Psoas muscle (tissue), 8 donors: ENCODE measurements at regions of chr4 and their contacts with region 1.

Region 1: DNA sequence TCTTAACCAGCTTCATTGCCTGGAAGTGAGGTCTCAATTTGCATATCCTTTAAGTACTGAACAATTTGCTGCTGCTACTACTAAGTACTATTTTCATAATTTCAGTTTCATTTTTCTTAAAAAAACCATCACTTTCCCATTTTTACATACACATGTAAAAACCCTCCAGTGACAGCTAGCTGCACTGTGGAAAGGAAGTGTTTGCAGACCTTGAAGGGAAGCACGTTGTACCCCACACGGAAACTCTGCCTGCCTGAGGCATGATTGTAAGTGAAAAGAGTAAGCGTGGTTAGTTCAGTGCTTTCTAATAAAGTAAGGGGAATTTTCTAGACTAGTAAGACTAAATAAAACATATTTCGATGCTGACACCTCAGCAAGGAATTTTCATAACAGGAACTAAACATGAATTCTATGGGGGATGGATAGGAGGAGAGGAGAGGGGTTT is 103.6 kb downstream of the RAPGEF2 start:
- DNase-seq: no peak
- ATAC-seq: no peak
- H3K4me3 ChIP-seq: no peak overlapping the region
- H3K27ac ChIP-seq: no peak overlapping the region
- H3K4me1 ChIP-seq: peaks cover 29% of the 10 kb centered on the region
- H3K27me3 ChIP-seq: no peaks in the 10 kb centered on the region
- CTCF ChIP-seq: no peak

Region 2: DNA sequence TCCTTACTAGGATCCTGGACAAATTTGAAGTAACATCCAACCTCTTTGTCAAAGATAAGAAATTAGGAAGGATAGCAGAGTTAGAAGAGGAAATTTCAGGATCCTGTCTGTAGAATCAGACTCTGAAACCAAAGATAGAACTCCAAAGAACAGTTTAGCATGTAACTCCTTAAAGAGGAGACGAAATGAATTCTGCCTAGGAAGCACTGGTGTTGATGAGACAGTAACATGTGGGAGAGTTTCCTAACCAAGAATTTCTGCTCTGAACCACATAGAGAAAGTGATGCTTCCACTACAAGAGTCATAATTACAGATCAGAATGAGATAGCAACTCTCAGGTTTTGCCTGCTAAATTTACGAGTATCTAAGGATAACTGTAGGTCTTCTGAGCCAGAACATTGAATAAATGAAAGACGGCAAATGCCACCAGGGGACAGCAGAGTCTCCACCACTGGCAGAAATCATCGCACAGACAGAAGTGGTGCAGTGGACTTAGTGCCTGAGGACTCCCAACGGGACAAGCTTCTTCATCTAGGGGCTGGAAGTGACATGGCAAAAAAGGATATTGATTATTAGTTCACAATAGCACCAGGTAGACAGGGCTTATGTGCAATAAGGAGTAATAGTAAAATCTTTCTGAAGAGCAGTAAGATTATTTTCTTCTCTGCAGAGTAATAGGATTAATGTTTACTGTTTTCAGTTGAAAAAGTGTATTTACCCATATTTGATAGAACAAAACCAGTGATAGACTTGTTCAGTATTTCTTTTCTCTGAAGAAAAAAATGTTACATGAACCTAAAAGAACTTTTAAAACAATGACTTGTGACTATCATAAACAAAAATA is 476.5 kb before region 1 on chr4:
- intact Hi-C with region 1: loop called (anchors 2 kb)
- DNase-seq: peak; percentile 43 to 66
- ATAC-seq: peak; percentile 87 to 99 (median 94)
- H3K4me3 ChIP-seq: no peak overlapping the region
- H3K27ac ChIP-seq: no peak overlapping the region
- H3K4me1 ChIP-seq: no peaks in the 10 kb centered on the region
- H3K27me3 ChIP-seq: no peaks in the 10 kb centered on the region
- CTCF ChIP-seq: peak; percentile 86

Region 3: GRCh38 chr4:158856852-158857251 is 349.6 kb before region 1 on chr4:
- intact Hi-C with region 1: loop called (anchors 2 to 10 kb)
- DNase-seq: no peak
- ATAC-seq: peak; percentile 36 to 58 (median 48)
- H3K4me3 ChIP-seq: no peak overlapping the region
- H3K27ac ChIP-seq: no peak overlapping the region
- H3K4me1 ChIP-seq: no peaks in the 10 kb centered on the region
- H3K27me3 ChIP-seq: no peaks in the 10 kb centered on the region
- CTCF ChIP-seq: peak; percentile 52